Spleen (tissue), 13 donors: ENCODE measurements at regions of chr4 and their contacts with region 1.

Region 1: GRCh38 chr4:153211986-153212729 is 7.9 kb downstream of the TRIM2 start:
- DNase-seq: no peak
- H3K4me3 ChIP-seq: no peak overlapping the region
- H3K27ac ChIP-seq: no peak overlapping the region
- H3K4me1 ChIP-seq: peaks cover 0 to 6% (median 1%) of the 10 kb centered on the region in 6 donors
- H3K27me3 ChIP-seq: peaks cover 0 to under 1% (median 0%) of the 10 kb centered on the region in 7 donors
- CTCF ChIP-seq: no peak
- POLR2A ChIP-seq: no peak

Region 2: GRCh38 chr4:153153339-153153871 is 58.8 kb before region 1 on chr4:
- intact Hi-C with region 1: loop called (anchors 10 kb)
- DNase-seq: peak; percentile 87
- H3K4me3 ChIP-seq: peak overlapping the region; percentile 41 to 81 (median 62)
- H3K27ac ChIP-seq: peak overlapping the region in 7 of 8 donors; percentile 54 to 84 (median 74)
- H3K4me1 ChIP-seq: peaks cover 16 to 41% (median 31%) of the 10 kb centered on the region in 6 donors
- H3K27me3 ChIP-seq: peaks cover 0 to 50% (median 8%) of the 10 kb centered on the region in 7 donors
- CTCF ChIP-seq: no peak
- POLR2A ChIP-seq: no peak